Caco-2 (cell line): ENCODE measurements at regions of chr5 and their contacts with region 1.

Region 1: GRCh38 chr5:138706655-138707480 is 46.4 kb upstream of the CTNNA1 start:
- DNase-seq: no peak
- H3K4me3 ChIP-seq: no peak overlapping the region
- H3K4me3 Mint-ChIP-seq: no peak overlapping the region
- H3K27ac Mint-ChIP-seq: peak overlapping the region; percentile 89
- H3K4me1 ChIP-seq: peaks cover 46% of the 10 kb centered on the region
- H3K4me1 Mint-ChIP-seq: peaks cover 26% of the 10 kb centered on the region
- H3K27me3 ChIP-seq: no peaks in the 10 kb centered on the region
- H3K27me3 Mint-ChIP-seq: no peaks in the 10 kb centered on the region
- CTCF ChIP-seq: no peak

Region 2: DNA sequence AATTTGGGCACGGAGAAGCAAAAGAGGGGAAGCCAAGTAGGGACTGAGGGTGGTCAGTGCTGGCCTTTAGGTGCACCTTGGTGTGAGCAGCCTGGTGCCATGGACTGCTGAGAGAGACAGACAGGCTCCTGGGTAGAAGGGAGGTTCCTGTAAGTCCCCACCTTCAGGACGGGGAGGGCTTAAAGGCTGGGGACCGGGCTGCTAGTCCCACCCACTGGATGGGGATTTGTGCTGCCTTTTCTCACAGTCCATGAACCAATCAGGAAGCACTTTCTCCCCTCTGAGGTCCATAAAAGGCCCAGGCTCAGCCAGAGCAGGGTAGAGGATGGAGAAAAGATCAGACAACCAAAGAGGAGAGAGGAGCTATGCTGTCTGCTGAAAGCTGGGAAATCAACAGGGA is 390.5 kb before region 1 on chr5:
- CTCF ChIA-PET with region 1: no interaction called
- POLR2A ChIA-PET with region 1: no interaction called
- intact Hi-C with region 1: no loop called
- DNase-seq: no peak
- H3K4me3 ChIP-seq: no peak overlapping the region
- H3K4me3 Mint-ChIP-seq: no peak overlapping the region
- H3K27ac Mint-ChIP-seq: no peak overlapping the region
- H3K4me1 ChIP-seq: no peaks in the 10 kb centered on the region
- H3K4me1 Mint-ChIP-seq: no peaks in the 10 kb centered on the region
- H3K27me3 ChIP-seq: no peaks in the 10 kb centered on the region
- H3K27me3 Mint-ChIP-seq: no peaks in the 10 kb centered on the region
- CTCF ChIP-seq: no peak

Region 3: DNA sequence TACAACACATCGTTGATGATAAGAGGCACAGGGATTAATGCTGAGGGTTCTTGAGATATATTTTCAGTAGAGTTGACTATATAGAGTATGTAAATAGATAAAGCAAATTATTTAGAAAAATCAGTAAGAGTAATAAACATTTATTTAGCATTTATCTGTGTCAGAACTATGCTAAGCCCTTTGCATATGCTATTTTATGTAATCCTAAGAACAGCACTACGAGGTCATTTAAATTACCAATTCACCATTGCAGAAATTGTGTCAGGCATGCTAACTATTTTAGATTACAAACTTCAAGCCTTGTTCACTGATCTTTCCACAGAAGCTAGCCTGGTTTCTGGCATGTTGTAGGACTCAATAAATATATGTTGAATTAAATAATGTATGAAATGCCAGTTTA is 288.4 kb before region 1 on chr5:
- CTCF ChIA-PET with region 1: no interaction called
- POLR2A ChIA-PET with region 1: no interaction called
- intact Hi-C with region 1: no loop called
- DNase-seq: no peak
- H3K4me3 ChIP-seq: no peak overlapping the region
- H3K4me3 Mint-ChIP-seq: no peak overlapping the region
- H3K27ac Mint-ChIP-seq: no peak overlapping the region
- H3K4me1 ChIP-seq: no peaks in the 10 kb centered on the region
- H3K4me1 Mint-ChIP-seq: no peaks in the 10 kb centered on the region
- H3K27me3 ChIP-seq: no peaks in the 10 kb centered on the region
- H3K27me3 Mint-ChIP-seq: no peaks in the 10 kb centered on the region
- CTCF ChIP-seq: no peak

Region 4: GRCh38 chr5:138641547-138642298 is 65.1 kb before region 1 on chr5:
- CTCF ChIA-PET with region 1: no interaction called
- POLR2A ChIA-PET with region 1: no interaction called
- intact Hi-C with region 1: loop called (anchors 5 kb)
- DNase-seq: peak; percentile 78 to 83
- H3K4me3 ChIP-seq: no peak overlapping the region
- H3K4me3 Mint-ChIP-seq: no peak overlapping the region
- H3K27ac Mint-ChIP-seq: no peak overlapping the region
- H3K4me1 ChIP-seq: no peaks in the 10 kb centered on the region
- H3K4me1 Mint-ChIP-seq: no peaks in the 10 kb centered on the region
- H3K27me3 ChIP-seq: no peaks in the 10 kb centered on the region
- H3K27me3 Mint-ChIP-seq: no peaks in the 10 kb centered on the region
- CTCF ChIP-seq: peak; percentile 77 to 84

Region 5: GRCh38 chr5:138655530-138656190 is 51.2 kb before region 1 on chr5:
- CTCF ChIA-PET with region 1: no interaction called
- POLR2A ChIA-PET with region 1: no interaction called
- intact Hi-C with region 1: no loop called
- DNase-seq: no peak
- H3K4me3 ChIP-seq: no peak overlapping the region
- H3K4me3 Mint-ChIP-seq: no peak overlapping the region
- H3K27ac Mint-ChIP-seq: no peak overlapping the region
- H3K4me1 ChIP-seq: peaks cover 9% of the 10 kb centered on the region
- H3K4me1 Mint-ChIP-seq: peaks cover 16% of the 10 kb centered on the region
- H3K27me3 ChIP-seq: no peaks in the 10 kb centered on the region
- H3K27me3 Mint-ChIP-seq: no peaks in the 10 kb centered on the region
- CTCF ChIP-seq: no peak

Region 6: GRCh38 chr5:138668376-138669079 is 38.3 kb before region 1 on chr5:
- CTCF ChIA-PET with region 1: interaction called, 6 read pairs
- POLR2A ChIA-PET with region 1: no interaction called
- intact Hi-C with region 1: loop called (anchors 5 kb)
- DNase-seq: peak; percentile 31 to 77
- H3K4me3 ChIP-seq: no peak overlapping the region
- H3K4me3 Mint-ChIP-seq: no peak overlapping the region
- H3K27ac Mint-ChIP-seq: peak overlapping the region; percentile 49
- H3K4me1 ChIP-seq: peaks cover 44% of the 10 kb centered on the region
- H3K4me1 Mint-ChIP-seq: peaks cover 29% of the 10 kb centered on the region
- H3K27me3 ChIP-seq: no peaks in the 10 kb centered on the region
- H3K27me3 Mint-ChIP-seq: no peaks in the 10 kb centered on the region
- CTCF ChIP-seq: no peak

Region 7: GRCh38 chr5:138752951-138753793 is 46.3 kb after region 1 on chr5 and contains the start of gene CTNNA1:
- CTCF ChIA-PET with region 1: no interaction called
- POLR2A ChIA-PET with region 1: interaction called, 12 read pairs
- intact Hi-C with region 1: loop called (anchors 2 kb)
- DNase-seq: peak; percentile 91 to 94
- H3K4me3 ChIP-seq: peak within 1 kb of the TSS; percentile 86
- H3K4me3 Mint-ChIP-seq: peak within 1 kb of the TSS; percentile 93
- H3K27ac Mint-ChIP-seq: peak within 1 kb of the TSS; percentile 97
- H3K4me1 ChIP-seq: peaks cover 18% of the 10 kb centered on the region
- H3K4me1 Mint-ChIP-seq: peaks cover 52% of the 10 kb centered on the region
- H3K27me3 ChIP-seq: no peaks in the 10 kb centered on the region
- H3K27me3 Mint-ChIP-seq: no peaks in the 10 kb centered on the region
- CTCF ChIP-seq: no peak
- total RNA-seq, gene CTNNA1: 392 and 403 TPM in 2 replicates